CD14-positive monocyte (primary cell): ENCODE measurements at regions of chr1 and their contacts with region 1.

Region 1: DNA sequence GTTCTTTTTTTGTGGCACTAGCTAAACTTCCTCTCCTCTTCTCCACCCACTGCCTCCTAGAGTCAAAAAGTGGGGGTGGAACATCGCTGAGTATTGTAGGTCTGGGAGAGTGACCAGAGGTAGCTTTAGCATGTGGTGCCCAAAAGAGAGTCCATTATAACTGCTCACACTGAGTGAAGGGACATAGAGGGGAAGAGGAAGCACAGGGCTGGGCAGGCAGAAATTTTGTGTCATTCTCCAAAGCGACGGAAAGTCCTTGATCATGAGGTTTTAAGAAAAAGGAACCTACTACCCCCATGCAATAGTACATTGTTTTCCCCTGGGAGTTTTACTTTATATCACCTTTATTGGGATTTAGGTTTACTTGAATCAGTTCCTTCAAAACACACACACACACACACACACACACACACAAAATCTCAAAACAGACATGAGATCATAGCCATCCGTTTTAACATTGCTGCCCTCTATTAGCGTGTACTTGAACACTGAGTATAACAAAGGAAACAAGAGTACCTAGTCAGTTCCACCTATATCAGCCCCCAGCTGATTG is 4.1 kb downstream of the CD84 start:
- DNase-seq: peak; percentile 74 to 88 (median 82)
- H3K4me3 ChIP-seq: peak overlapping the region; percentile 2 to 83 (median 37)
- H3K4me3 Mint-ChIP-seq: peak overlapping the region; percentile 63 to 82
- H3K27ac ChIP-seq: peak overlapping the region; percentile 92 to 98
- H3K27ac Mint-ChIP-seq: peak overlapping the region; percentile 93 to 99 (median 96)
- H3K4me1 ChIP-seq: peaks cover 89 to 93% of the 10 kb centered on the region in 2 donors
- H3K4me1 Mint-ChIP-seq: peaks cover 85% of the 10 kb centered on the region
- H3K27me3 ChIP-seq: no peaks in the 10 kb centered on the region
- H3K27me3 Mint-ChIP-seq: no peaks in the 10 kb centered on the region
- CTCF ChIP-seq: no peak

Region 2: GRCh38 chr1:160354388-160354985 is 220.7 kb before region 1 on chr1:
- intact Hi-C with region 1: no loop called
- DNase-seq: peak in 1 of 3 donors; percentile 19
- H3K4me3 ChIP-seq: no peak overlapping the region
- H3K4me3 Mint-ChIP-seq: no peak overlapping the region
- H3K27ac ChIP-seq: peak overlapping the region in 1 of 2 donors; percentile 44
- H3K27ac Mint-ChIP-seq: peak overlapping the region in 2 of 7 donors; percentile 53 to 68
- H3K4me1 ChIP-seq: no peaks in the 10 kb centered on the region
- H3K4me1 Mint-ChIP-seq: no peaks in the 10 kb centered on the region
- H3K27me3 ChIP-seq: no peaks in the 10 kb centered on the region
- H3K27me3 Mint-ChIP-seq: no peaks in the 10 kb centered on the region
- CTCF ChIP-seq: peak; percentile 52

Region 3: DNA sequence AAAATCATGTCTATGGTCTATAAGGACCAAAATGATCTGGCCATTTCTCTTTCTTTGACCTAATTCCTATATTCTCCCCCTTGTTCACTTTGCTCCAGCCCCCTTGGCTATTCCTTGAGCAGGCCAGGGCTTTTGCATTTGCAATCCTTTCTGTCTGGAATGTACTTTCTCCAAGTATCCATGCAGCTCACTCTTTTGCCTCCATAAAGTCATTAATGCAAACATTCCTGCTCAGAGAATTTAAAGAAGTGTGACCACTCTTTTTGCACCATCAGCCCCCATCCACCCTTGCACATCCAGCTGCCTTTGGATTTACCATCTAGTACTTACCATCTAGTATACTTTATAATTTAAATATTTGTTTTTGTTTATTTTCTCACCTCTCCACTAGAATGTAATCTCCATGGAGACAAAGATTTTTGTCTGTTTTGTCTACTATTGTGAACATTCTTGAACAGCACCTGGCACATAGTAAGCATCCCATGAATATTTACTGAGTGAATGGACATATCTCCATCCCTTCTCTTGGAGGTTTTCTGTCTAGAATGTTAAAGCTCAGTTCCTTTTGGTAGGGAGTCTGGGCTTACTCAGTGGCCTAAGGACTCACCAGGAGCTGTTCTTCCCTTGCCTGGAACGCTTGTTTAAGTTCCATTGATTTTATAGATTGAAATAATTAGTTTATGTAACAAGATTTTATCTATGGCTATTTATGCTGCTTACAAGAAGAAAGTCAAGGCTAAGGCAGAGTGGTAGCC is 74.7 kb before region 1 on chr1:
- intact Hi-C with region 1: no loop called
- DNase-seq: no peak
- H3K4me3 ChIP-seq: no peak overlapping the region
- H3K4me3 Mint-ChIP-seq: no peak overlapping the region
- H3K27ac ChIP-seq: peak overlapping the region in 1 of 2 donors; percentile 42
- H3K27ac Mint-ChIP-seq: peak overlapping the region in 4 of 7 donors; percentile 41 to 91 (median 76)
- H3K4me1 ChIP-seq: peaks cover 10 to 13% of the 10 kb centered on the region in 2 donors
- H3K4me1 Mint-ChIP-seq: peaks cover 25% of the 10 kb centered on the region
- H3K27me3 ChIP-seq: no peaks in the 10 kb centered on the region
- H3K27me3 Mint-ChIP-seq: no peaks in the 10 kb centered on the region
- CTCF ChIP-seq: no peak

Region 4: GRCh38 chr1:160539990-160540858 is 35.0 kb before region 1 on chr1:
- intact Hi-C with region 1: loop called in 1 of 2 experiments (anchors 5 kb)
- DNase-seq: peak; percentile 32 to 58 (median 41)
- H3K4me3 ChIP-seq: peak overlapping the region in 1 of 3 experiments; percentile 1
- H3K4me3 Mint-ChIP-seq: peak overlapping the region in 1 of 2 donors; percentile 22
- H3K27ac ChIP-seq: peak overlapping the region in 1 of 2 donors; percentile 53
- H3K27ac Mint-ChIP-seq: peak overlapping the region; percentile 41 to 92 (median 68)
- H3K4me1 ChIP-seq: peaks cover 19 to 22% of the 10 kb centered on the region in 2 donors
- H3K4me1 Mint-ChIP-seq: peaks cover 37% of the 10 kb centered on the region
- H3K27me3 ChIP-seq: no peaks in the 10 kb centered on the region
- H3K27me3 Mint-ChIP-seq: no peaks in the 10 kb centered on the region
- CTCF ChIP-seq: no peak

Region 5: GRCh38 chr1:160607011-160607671 is 32.0 kb after region 1 on chr1:
- intact Hi-C with region 1: loop called in 1 of 2 experiments (anchors 2 kb)
- DNase-seq: peak; percentile 79 to 89 (median 88)
- H3K4me3 ChIP-seq: no peak overlapping the region
- H3K4me3 Mint-ChIP-seq: no peak overlapping the region
- H3K27ac ChIP-seq: no peak overlapping the region
- H3K27ac Mint-ChIP-seq: peak overlapping the region in 1 of 7 donors; percentile 55
- H3K4me1 ChIP-seq: no peaks in the 10 kb centered on the region
- H3K4me1 Mint-ChIP-seq: peaks cover 7% of the 10 kb centered on the region
- H3K27me3 ChIP-seq: no peaks in the 10 kb centered on the region
- H3K27me3 Mint-ChIP-seq: no peaks in the 10 kb centered on the region
- CTCF ChIP-seq: peak; percentile 82

Region 6: GRCh38 chr1:160862203-160863060 is 287.2 kb after region 1 on chr1 and contains the start of gene CD244:
- intact Hi-C with region 1: loop called in 1 of 2 experiments (anchors 5 kb)
- DNase-seq: peak; percentile 88 to 97 (median 94)
- H3K4me3 ChIP-seq: peak within 1 kb of the TSS; percentile 56 to 78 (median 58)
- H3K4me3 Mint-ChIP-seq: peak within 1 kb of the TSS; percentile 84 to 99
- H3K27ac ChIP-seq: peak within 1 kb of the TSS; percentile 95 to 98
- H3K27ac Mint-ChIP-seq: peak within 1 kb of the TSS; percentile 92 to 99 (median 98)
- H3K4me1 ChIP-seq: peaks cover 85 to 89% of the 10 kb centered on the region in 2 donors
- H3K4me1 Mint-ChIP-seq: peaks cover 88% of the 10 kb centered on the region
- H3K27me3 ChIP-seq: no peaks in the 10 kb centered on the region
- H3K27me3 Mint-ChIP-seq: peaks cover 0 to 3% (median 0%) of the 10 kb centered on the region in 3 donors
- CTCF ChIP-seq: no peak
- polyA plus RNA-seq, gene CD244: 62.2 to 116 (median 106) TPM